Activated CD8-positive, alpha-beta T cell treated with anti-CD3 and anti-CD28 coated beads, Interleukin-2, amount 10 ng/mL, durations not matched to agents 7 days and 5 days (primary cell): ENCODE measurements at regions of chr21 and their contacts with region 1.

Region 1: GRCh38 chr21:42392721-42393442 is 3.0 kb downstream of the TMPRSS3 start:
- DNase-seq: no peak
- ATAC-seq: peak; percentile 73
- H3K4me3 Mint-ChIP-seq: peak overlapping the region; percentile 42
- H3K27ac Mint-ChIP-seq: peak overlapping the region; percentile 74
- H3K4me1 Mint-ChIP-seq: peaks cover 73% of the 10 kb centered on the region
- H3K27me3 Mint-ChIP-seq: no peaks in the 10 kb centered on the region

Region 2: GRCh38 chr21:42381334-42381984 is 11.4 kb before region 1 on chr21:
- CTCF ChIA-PET with region 1: interaction called, 16 read pairs
- POLR2A ChIA-PET with region 1: interaction called, 3 read pairs
- DNase-seq: peak; percentile 45
- ATAC-seq: peak; percentile 58
- H3K4me3 Mint-ChIP-seq: no peak overlapping the region
- H3K27ac Mint-ChIP-seq: no peak overlapping the region
- H3K4me1 Mint-ChIP-seq: peaks cover 25% of the 10 kb centered on the region
- H3K27me3 Mint-ChIP-seq: no peaks in the 10 kb centered on the region

Region 3: DNA sequence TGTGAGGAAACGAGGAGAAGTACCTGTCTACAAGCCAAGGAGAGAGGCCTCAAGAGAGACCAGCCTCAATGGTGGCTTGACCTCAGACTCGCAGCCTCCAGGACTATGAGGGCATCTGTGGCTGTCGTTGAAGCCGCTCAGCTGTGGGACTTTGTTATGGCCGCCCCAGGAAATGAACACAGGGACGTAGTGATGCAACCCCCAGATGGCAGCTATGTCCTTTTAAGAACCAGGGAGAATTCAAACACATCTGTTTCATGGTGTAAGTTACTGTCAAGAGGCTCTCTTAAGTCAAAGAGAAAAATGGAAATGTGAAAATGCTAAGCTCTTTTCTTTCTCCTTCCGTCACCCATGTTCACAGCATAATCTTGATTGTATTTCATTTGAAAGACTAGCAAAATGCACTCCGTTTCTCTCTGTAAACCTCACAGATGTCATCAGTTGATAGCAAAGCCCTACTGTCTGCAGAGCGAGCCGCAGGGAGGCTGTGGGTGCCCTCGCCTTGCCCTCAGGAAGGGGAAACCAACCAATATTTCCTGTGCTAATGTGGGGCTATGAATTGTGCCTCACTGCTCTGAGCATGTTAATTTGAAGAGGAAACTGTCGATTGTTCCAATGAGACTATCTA is 32.1 kb after region 1 on chr21:
- CTCF ChIA-PET with region 1: interaction called, 10 read pairs
- POLR2A ChIA-PET with region 1: interaction called, 10 read pairs
- DNase-seq: peak; percentile 89
- ATAC-seq: peak; percentile 83
- H3K4me3 Mint-ChIP-seq: peak overlapping the region; percentile 67
- H3K27ac Mint-ChIP-seq: peak overlapping the region; percentile 90
- H3K4me1 Mint-ChIP-seq: peaks cover 77% of the 10 kb centered on the region
- H3K27me3 Mint-ChIP-seq: no peaks in the 10 kb centered on the region